ENCODE measurements at regions of chr3 and their contacts with region 1.

Region 1: DNA sequence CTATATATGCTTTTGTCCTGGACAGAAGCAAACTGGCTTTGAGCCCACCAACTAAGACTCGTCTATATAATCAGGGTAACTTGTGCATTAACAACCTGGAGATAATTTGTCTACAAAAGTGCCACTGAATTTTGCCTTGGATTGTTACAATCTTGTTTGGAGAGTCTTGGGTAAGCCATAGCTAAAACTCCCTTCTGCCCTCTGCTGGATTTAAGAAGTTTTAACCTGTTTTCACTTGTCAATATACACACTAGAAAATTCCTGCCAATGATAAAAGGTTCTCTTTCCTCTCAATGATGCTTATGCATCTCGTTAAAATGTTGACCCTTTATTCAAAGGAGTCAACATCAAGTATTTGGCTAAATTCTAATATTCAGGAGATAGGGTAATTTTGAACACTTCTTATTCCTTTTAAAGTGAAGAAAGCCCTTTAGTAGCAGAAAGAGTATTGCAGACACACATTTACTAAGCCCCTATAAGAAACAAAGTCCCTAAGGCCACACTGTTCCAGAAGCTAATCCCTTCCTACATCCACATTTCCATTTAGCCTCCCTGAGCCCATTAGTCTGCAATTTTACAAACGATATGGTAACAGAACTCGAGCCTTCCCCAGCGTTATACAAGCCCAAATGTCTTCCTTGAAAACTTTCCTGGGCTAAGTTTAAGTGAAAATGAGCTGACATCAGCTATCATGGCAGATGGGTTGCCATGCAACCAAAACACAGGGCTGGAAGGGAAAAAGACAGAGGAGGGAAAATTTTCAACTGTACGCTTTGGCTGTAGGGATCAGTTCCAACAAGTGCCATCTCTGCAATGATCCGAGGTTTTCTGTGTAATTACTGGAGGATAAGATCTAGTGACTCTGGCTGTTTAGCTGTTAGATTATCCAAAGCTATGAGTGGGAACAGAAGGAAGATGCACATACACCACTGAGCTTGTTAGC is 75.9 kb upstream of the FGF12 start:
- DNase-seq: no peak
- ATAC-seq: peak; percentile 44
- H3K4me3 ChIP-seq: no peak overlapping the region
- H3K4me1 ChIP-seq: no peaks in the 10 kb centered on the region
- CTCF ChIP-seq: no peak

Region 2: GRCh38 chr3:192467230-192468140 is 335.7 kb before region 1 on chr3:
- intact Hi-C with region 1: loop called in 1 of 2 experiments (anchors 10 kb)
- DNase-seq: peak in 2 of 3 donors; percentile 27 to 70
- ATAC-seq: peak; percentile 85
- H3K4me3 ChIP-seq: no peak overlapping the region
- H3K4me1 ChIP-seq: no peaks in the 10 kb centered on the region
- CTCF ChIP-seq: peak; percentile 74

Region 3: GRCh38 chr3:192566706-192567290 is 236.4 kb before region 1 on chr3:
- intact Hi-C with region 1: loop called (anchors 5 to 10 kb)
- DNase-seq: peak in 2 of 3 donors; percentile 30 to 84
- ATAC-seq: peak; percentile 73
- H3K4me3 ChIP-seq: no peak overlapping the region
- H3K4me1 ChIP-seq: no peaks in the 10 kb centered on the region
- CTCF ChIP-seq: no peak

Region 4: GRCh38 chr3:192899540-192899982 is 96.3 kb after region 1 on chr3:
- intact Hi-C with region 1: no loop called
- DNase-seq: no peak
- ATAC-seq: no peak
- H3K4me3 ChIP-seq: no peak overlapping the region
- H3K4me1 ChIP-seq: no peaks in the 10 kb centered on the region
- CTCF ChIP-seq: no peak

Region 5: DNA sequence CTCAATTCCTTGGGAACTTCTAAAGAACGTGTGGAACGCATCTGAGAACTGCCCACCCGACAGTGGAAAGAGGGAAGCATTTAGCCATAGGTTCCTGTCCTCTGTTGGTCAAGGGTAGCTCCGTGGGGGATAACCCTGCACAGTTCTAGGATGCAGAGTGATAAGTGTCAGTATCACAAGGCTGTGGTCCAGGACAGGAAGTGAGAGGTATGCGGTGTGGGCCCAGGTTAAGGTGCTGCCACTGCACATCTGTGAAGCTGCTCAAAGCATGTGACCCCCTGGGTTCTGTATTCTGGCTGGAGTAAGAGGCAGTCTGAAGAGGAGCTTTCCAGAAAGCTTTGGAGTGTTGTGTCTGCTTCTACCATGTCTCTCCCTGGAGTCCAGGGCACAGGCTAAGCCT is 1281.1 kb after region 1 on chr3:
- intact Hi-C with region 1: no loop called
- DNase-seq: no peak
- ATAC-seq: no peak
- H3K4me3 ChIP-seq: no peak overlapping the region
- H3K4me1 ChIP-seq: peaks cover 19% of the 10 kb centered on the region
- CTCF ChIP-seq: no peak

Measured in mucosa of descending colon (tissue), 3 donors.